ENCODE measurements at regions of chr2 and their contacts with region 1.

Region 1: DNA sequence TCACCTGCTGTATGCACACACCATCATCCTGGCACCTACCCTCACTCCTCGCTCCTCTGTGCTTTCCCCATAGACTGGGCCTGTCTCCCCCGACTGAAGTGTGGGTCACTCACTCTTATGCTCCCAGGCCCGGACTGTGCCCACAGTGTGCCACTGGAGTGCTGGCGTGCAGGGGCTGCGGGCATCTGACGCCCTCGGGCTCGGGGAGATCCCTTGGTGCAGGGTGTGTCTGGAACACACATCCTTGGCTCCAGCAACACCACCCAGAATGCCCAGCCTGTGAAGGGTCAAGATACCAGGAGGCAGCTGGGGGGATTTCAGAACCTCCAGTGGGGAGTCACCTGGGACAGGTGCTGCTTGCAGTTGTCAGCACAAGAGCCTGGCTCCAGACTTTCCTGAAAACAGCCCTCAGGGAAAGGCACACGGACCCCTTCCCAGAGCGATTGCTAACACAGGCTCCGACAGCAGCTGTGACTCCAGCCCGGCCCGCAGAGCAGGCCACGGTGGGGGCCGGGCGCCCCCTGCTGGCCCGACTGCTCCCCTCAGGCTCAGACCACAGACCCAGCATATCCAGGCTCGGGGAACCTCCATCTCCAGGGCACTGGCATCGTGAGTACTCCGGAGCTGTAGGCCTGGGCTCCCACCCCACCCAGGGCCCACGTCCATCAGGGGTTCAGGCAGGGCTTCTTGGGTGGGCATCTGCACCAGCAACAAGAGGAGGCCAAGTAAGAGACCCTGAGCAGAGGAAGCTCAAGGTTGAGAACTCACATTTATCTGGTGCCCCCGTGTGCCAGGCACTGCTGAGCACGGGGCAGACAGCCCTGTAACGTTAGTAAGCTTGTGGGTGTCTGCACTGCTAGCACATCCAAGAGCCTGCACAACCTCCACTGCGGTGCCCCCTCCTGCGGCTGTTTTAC is 8.6 kb downstream of the HS1BP3 start:
- DNase-seq: peak; percentile 70 to 86 (median 85)
- ATAC-seq: peak; percentile 95
- H3K4me3 ChIP-seq: no peak overlapping the region
- H3K4me1 ChIP-seq: no peaks in the 10 kb centered on the region
- CTCF ChIP-seq: peak; percentile 87

Region 2: GRCh38 chr2:20403774-20404312 is 238.5 kb before region 1 on chr2:
- intact Hi-C with region 1: loop called in 1 of 2 experiments (anchors 5 kb)
- DNase-seq: no peak
- ATAC-seq: peak; percentile 14
- H3K4me3 ChIP-seq: no peak overlapping the region
- H3K4me1 ChIP-seq: no peaks in the 10 kb centered on the region
- CTCF ChIP-seq: no peak

Region 3: DNA sequence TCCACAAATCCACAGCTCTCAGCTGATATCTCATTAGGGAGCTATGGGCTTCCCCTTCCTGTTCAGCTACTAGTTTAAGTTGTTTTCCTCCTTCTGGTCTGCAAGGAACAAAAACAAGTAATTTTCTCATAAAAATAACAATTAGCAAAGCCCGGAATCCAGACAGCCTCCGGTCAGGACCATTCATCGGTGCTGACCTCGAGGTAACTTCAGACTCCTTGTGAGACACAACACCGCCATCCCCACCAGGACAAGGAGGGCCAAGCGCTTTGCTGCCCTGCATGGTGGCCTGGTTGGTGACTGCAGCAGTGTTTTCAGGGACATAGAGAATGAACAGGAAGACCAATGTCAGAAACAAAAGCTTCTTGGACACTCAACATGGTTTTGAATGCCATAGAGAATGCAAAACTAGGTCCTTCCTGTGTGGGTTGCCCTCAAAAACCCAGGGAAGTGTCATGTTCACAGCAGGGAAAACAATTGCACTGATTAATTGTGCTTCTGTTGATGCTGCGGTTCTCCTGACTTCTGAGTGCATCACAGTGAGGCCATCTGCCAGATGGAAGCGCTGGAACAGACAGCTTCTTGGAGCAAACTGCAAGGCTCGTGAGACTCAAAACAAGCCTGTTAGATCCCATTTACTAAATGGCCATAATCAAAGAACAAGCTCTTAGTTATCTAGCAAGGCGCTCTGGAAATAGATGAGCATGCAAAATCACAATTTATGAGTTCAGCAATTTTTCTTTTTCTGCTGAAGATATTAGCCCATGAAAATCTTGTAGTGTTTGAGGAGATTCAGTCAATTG is 68.5 kb before region 1 on chr2:
- intact Hi-C with region 1: no loop called
- DNase-seq: peak in 1 of 3 donors; percentile 54
- ATAC-seq: no peak
- H3K4me3 ChIP-seq: no peak overlapping the region
- H3K4me1 ChIP-seq: peaks cover 3% of the 10 kb centered on the region
- CTCF ChIP-seq: no peak

Region 4: GRCh38 chr2:20758997-20759396 is 116.7 kb after region 1 on chr2:
- intact Hi-C with region 1: no loop called
- DNase-seq: no peak
- ATAC-seq: no peak
- H3K4me3 ChIP-seq: no peak overlapping the region
- H3K4me1 ChIP-seq: no peaks in the 10 kb centered on the region
- CTCF ChIP-seq: no peak